CD8-positive, alpha-beta memory T cell (primary cell): ENCODE measurements at regions of chr19 and their contacts with region 1.

Region 1: DNA sequence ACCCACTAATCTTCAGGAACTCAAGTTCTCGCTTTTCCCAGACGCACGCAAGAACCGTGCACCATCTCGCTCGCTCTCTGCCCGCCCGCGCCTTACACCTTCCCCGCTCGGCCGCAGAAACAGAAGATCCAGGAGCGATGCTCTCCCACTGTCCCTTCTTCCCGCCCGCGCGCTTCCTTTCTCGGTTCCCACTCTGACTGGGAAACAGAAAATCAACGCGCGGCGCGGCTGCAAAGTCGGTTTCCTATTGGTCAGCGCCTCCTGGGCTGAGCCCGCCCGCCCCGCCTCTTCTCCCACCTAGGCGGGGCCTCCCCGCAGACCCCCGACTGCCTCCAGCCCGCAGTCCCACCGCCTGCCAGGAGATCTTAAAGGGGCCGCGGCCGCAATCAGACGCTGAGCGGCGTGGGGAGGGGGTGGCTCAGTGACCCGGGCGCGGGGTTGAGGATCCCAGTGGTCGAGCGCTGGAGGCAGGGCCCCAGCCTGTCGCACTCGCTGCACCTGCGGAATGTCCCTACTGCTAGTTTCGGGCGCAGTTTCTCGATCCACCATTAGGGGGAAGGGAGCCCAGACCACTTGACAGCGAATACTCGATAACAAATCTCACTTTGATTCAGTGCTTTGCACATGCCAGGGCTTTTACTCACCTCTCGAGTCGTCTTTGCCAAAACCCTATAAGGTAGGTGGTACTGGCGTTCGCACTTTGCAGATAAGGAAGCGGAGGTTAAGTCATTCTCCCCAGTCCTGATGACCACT is 685 bp upstream of the SLC25A23 start:
- DNase-seq: peak; percentile 92 to 97 (median 96)
- H3K4me3 ChIP-seq: peak overlapping the region; percentile 95
- H3K4me3 Mint-ChIP-seq: peak overlapping the region; percentile 92 to 98 (median 96)
- H3K27ac ChIP-seq: peak overlapping the region; percentile 65
- H3K27ac Mint-ChIP-seq: peak overlapping the region; percentile 82 to 97 (median 90)
- H3K4me1 ChIP-seq: peaks cover 16% of the 10 kb centered on the region
- H3K4me1 Mint-ChIP-seq: peaks cover 19 to 35% (median 26%) of the 10 kb centered on the region in 3 donors
- H3K27me3 ChIP-seq: no peaks in the 10 kb centered on the region
- H3K27me3 Mint-ChIP-seq: no peaks in the 10 kb centered on the region

Region 2: DNA sequence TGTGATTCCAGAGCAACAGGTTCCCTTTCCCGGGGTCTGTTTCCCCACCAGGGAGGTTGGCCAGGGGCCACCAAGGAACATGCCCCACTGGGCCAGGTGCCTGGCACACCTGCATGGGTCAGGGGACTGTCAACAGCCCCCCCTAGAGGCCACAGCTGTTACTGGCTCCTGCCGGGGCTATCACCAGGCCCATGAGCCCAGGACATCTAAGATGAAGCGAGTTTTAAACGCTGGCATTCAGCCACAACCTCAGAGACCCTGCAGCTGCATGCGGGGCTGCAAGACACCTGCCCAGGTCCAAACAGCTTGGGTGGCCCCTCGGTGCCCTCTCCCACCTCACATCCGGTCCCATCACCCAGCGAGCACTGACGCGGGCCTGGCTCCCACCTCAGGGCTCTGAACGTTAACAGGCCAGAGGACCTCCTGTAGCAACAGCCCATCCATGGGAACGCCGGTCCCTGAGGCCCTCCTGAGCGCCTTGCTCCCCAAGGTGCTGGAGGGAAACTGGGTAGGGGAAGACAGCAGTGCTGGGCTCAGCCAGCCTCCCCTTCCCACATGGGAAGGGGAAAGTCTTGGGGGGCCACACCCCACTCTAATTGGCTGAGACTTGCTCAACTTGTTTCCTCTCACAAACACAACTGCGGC is 47.7 kb before region 1 on chr19:
- CTCF ChIA-PET with region 1: no interaction called
- POLR2A ChIA-PET with region 1: no interaction called
- DNase-seq: peak; percentile 14 to 62 (median 18)
- H3K4me3 ChIP-seq: no peak overlapping the region
- H3K4me3 Mint-ChIP-seq: no peak overlapping the region
- H3K27ac ChIP-seq: no peak overlapping the region
- H3K27ac Mint-ChIP-seq: peak overlapping the region in 1 of 8 donors; percentile 3
- H3K4me1 ChIP-seq: no peaks in the 10 kb centered on the region
- H3K4me1 Mint-ChIP-seq: no peaks in the 10 kb centered on the region
- H3K27me3 ChIP-seq: no peaks in the 10 kb centered on the region
- H3K27me3 Mint-ChIP-seq: no peaks in the 10 kb centered on the region

Region 3: DNA sequence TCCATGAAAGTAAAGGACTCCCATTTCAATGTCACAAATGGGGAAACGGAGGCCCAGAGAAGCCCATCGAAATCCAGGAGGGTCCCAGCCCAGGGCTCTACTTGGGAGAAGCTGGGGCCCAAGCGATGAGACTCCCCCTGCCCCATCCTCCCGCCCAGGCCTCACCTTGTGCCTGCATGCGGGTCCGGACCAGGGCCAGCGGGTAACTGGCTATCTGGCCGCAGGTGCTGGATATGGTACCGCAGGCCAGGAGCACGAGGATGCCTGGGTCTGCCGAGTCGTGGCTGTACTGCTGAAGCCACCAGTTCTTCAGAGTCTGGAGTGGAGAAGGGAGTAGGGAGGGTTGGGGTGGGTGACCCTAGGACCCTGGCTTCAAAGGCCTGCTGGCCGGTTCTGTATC is 16.3 kb before region 1 on chr19:
- CTCF ChIA-PET with region 1: no interaction called
- POLR2A ChIA-PET with region 1: no interaction called
- DNase-seq: no peak
- H3K4me3 ChIP-seq: no peak overlapping the region
- H3K4me3 Mint-ChIP-seq: no peak overlapping the region
- H3K27ac ChIP-seq: no peak overlapping the region
- H3K27ac Mint-ChIP-seq: no peak overlapping the region
- H3K4me1 ChIP-seq: no peaks in the 10 kb centered on the region
- H3K4me1 Mint-ChIP-seq: no peaks in the 10 kb centered on the region
- H3K27me3 ChIP-seq: no peaks in the 10 kb centered on the region
- H3K27me3 Mint-ChIP-seq: peaks cover 0 to 2% of the 10 kb centered on the region in 2 donors

Region 4: GRCh38 chr19:6674868-6675305 is 214.6 kb after region 1 on chr19:
- CTCF ChIA-PET with region 1: no interaction called
- POLR2A ChIA-PET with region 1: interaction called, 13 read pairs
- DNase-seq: peak; percentile 53 to 94 (median 82)
- H3K4me3 ChIP-seq: peak overlapping the region; percentile 32
- H3K4me3 Mint-ChIP-seq: peak overlapping the region; percentile 61 to 94 (median 73)
- H3K27ac ChIP-seq: no peak overlapping the region
- H3K27ac Mint-ChIP-seq: peak overlapping the region; percentile 68 to 99 (median 87)
- H3K4me1 ChIP-seq: peaks cover 30% of the 10 kb centered on the region
- H3K4me1 Mint-ChIP-seq: peaks cover 62 to 74% (median 71%) of the 10 kb centered on the region in 3 donors
- H3K27me3 ChIP-seq: no peaks in the 10 kb centered on the region
- H3K27me3 Mint-ChIP-seq: peaks cover 0 to 7% of the 10 kb centered on the region in 2 donors

Region 5: GRCh38 chr19:6935069-6935468 is 474.8 kb after region 1 on chr19:
- CTCF ChIA-PET with region 1: no interaction called
- POLR2A ChIA-PET with region 1: interaction called, 10 read pairs
- DNase-seq: no peak
- H3K4me3 ChIP-seq: no peak overlapping the region
- H3K4me3 Mint-ChIP-seq: no peak overlapping the region
- H3K27ac ChIP-seq: no peak overlapping the region
- H3K27ac Mint-ChIP-seq: no peak overlapping the region
- H3K4me1 ChIP-seq: no peaks in the 10 kb centered on the region
- H3K4me1 Mint-ChIP-seq: no peaks in the 10 kb centered on the region
- H3K27me3 ChIP-seq: no peaks in the 10 kb centered on the region
- H3K27me3 Mint-ChIP-seq: peaks cover 2 to 11% of the 10 kb centered on the region in 2 donors